ENCODE measurements at regions of chr4 and their contacts with region 1.

Region 1: GRCh38 chr4:113901994-113902787 is 77.3 kb downstream of the ARSJ start:
- DNase-seq: peak; percentile 78
- ATAC-seq: peak; percentile 91
- H3K4me3 Mint-ChIP-seq: peak overlapping the region; percentile 63
- H3K27ac Mint-ChIP-seq: peak overlapping the region; percentile 92
- H3K4me1 Mint-ChIP-seq: peaks cover 65% of the 10 kb centered on the region
- H3K27me3 Mint-ChIP-seq: no peaks in the 10 kb centered on the region
- CTCF ChIP-seq: peak; percentile 64

Region 2: DNA sequence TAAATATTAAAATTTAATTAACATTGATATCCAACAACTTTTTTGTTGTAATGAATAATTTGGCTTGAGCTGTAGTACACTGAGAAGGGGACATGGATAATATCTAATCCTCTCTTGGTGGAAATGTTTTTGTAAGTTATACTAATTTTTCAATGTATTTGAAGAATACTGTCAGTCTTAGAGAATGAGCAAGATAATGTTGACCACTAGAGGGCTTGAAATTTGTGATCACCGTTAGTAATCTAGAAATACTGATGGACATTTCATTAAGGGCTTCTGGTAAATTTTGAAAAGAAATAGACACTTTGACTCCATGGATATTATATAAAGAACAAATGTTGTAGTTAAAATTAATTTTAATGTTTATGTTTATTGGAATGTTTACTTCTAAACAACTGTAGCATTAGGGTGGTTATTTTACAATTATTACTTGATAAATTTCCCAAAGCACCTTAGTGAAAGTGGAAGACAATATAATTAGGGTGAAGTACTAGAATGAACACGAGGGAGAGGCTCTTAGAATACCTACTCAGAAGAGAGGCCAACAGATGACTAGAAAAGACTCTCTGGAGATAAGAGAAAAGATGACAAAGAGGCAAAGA is 120.7 kb before region 1 on chr4:
- CTCF ChIA-PET with region 1: interaction called, 3 read pairs
- POLR2A ChIA-PET with region 1: no interaction called
- intact Hi-C with region 1: loop called (anchors 5 kb)
- DNase-seq: no peak
- ATAC-seq: peak; percentile 34
- H3K4me3 Mint-ChIP-seq: no peak overlapping the region
- H3K27ac Mint-ChIP-seq: no peak overlapping the region
- H3K4me1 Mint-ChIP-seq: peaks cover 28% of the 10 kb centered on the region
- H3K27me3 Mint-ChIP-seq: no peaks in the 10 kb centered on the region
- CTCF ChIP-seq: peak; percentile 73

Region 3: GRCh38 chr4:114302472-114302871 is 400.3 kb after region 1 on chr4:
- CTCF ChIA-PET with region 1: no interaction called
- POLR2A ChIA-PET with region 1: no interaction called
- intact Hi-C with region 1: no loop called
- DNase-seq: no peak
- ATAC-seq: no peak
- H3K4me3 Mint-ChIP-seq: no peak overlapping the region
- H3K27ac Mint-ChIP-seq: no peak overlapping the region
- H3K4me1 Mint-ChIP-seq: no peaks in the 10 kb centered on the region
- H3K27me3 Mint-ChIP-seq: peaks cover 2% of the 10 kb centered on the region
- CTCF ChIP-seq: no peak

Region 4: DNA sequence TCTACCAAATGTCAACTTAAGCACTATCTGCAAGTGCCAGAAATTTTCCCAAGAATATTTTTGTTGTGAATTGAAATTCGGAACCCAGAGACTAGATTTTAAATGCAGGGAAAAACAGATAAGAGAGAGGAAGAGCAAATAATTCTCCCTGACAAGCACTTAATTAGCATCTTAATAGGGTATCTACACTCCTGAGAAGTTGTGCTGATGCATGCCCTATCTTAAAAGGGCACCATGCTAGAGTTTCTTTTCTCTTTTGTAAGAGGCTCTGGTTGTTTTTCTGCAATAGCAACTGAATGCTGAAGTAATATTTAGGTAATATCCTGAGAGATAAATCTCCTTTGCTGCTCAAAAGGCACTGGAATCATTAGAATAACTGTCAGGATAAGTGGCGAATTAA is 556.5 kb after region 1 on chr4:
- CTCF ChIA-PET with region 1: no interaction called
- POLR2A ChIA-PET with region 1: no interaction called
- intact Hi-C with region 1: no loop called
- DNase-seq: no peak
- ATAC-seq: no peak
- H3K4me3 Mint-ChIP-seq: no peak overlapping the region
- H3K27ac Mint-ChIP-seq: no peak overlapping the region
- H3K4me1 Mint-ChIP-seq: no peaks in the 10 kb centered on the region
- H3K27me3 Mint-ChIP-seq: no peaks in the 10 kb centered on the region
- CTCF ChIP-seq: no peak

Measured in activated CD8-positive, alpha-beta T cell treated with anti-CD3 and anti-CD28 coated beads for 36 hours (primary cell).